Dendritic cell treated with granulocyte-macrophage colony-stimulating factor and Interleukin-4, amounts not matched to agents 40 ng/mL and 50 ng/mL, for 4 days (primary cell): ENCODE measurements at regions of chr3 and their contacts with region 1.

Region 1: GRCh38 chr3:105260385-105260784 is 106.3 kb upstream of the ALCAM start:
- H3K4me3 Mint-ChIP-seq: no peak overlapping the region
- H3K27ac Mint-ChIP-seq: no peak overlapping the region
- H3K4me1 Mint-ChIP-seq: no peaks in the 10 kb centered on the region
- H3K27me3 Mint-ChIP-seq: no peaks in the 10 kb centered on the region

Region 2: DNA sequence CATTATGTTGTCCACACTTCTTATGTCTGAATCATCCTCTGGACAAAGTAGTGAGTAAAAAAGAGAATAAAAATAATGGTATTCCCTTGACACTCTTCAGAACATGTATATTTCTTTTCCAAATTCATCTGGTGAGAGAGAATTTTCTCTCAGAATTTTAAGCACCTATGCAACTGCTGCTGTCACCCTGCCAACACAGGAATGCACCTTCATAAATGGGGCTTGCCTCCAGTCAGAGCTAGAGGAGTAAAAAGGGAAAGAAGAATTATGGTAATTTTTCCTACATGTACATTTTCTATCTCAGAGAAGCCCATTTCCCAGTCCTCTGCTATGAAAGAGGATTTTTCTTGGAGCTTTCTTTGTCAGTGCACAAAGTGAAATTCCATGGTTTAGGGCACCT is 14.2 kb after region 1 on chr3:
- intact Hi-C with region 1: loop called (anchors 1 kb)
- H3K4me3 Mint-ChIP-seq: no peak overlapping the region
- H3K27ac Mint-ChIP-seq: no peak overlapping the region
- H3K4me1 Mint-ChIP-seq: no peaks in the 10 kb centered on the region
- H3K27me3 Mint-ChIP-seq: peaks cover 1% of the 10 kb centered on the region

Region 3: DNA sequence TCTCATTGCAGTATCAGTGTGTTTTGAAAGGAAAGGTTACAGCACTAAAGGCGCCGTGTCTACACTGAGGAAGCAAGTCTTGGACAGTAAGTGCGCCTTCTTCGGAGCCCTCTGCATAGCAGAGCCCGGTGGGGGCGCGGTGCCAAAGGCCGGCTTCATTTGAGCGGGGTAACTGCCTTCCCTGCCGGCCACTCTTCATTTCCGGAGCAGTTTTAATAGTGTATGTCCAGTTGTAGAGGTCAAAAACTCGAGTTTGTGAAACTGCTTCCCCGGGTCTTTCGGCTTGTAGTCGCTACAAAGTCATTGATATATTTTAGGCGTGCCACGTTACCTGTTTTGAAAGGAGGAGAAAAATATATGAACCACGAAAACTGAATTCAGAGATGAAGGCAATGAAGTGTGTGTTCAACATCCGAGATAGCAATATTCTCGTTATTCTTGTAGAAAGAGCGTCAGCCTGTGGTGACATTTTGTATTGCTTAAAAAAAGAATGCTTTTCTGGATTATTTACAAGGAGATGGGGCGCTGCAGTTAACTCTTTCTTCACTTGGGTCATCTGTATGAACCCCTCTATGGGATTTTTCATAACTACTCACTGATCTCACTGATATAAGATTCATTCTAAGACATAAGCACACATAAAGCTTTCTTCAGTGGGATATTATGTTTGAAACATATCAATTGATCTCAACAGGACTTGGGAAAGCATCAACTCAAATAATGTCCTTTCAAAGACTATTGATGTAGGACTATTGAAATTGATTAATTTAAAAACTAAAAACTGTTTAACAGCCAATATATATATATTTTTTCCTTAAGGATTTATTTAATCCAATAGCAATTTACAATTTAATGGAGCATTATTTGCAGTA is 109.4 kb after region 1 on chr3:
- intact Hi-C with region 1: no loop called
- H3K4me3 Mint-ChIP-seq: peak overlapping the region; percentile 87
- H3K27ac Mint-ChIP-seq: peak overlapping the region; percentile 99
- H3K4me1 Mint-ChIP-seq: peaks cover 47% of the 10 kb centered on the region
- H3K27me3 Mint-ChIP-seq: no peaks in the 10 kb centered on the region

Region 4: DNA sequence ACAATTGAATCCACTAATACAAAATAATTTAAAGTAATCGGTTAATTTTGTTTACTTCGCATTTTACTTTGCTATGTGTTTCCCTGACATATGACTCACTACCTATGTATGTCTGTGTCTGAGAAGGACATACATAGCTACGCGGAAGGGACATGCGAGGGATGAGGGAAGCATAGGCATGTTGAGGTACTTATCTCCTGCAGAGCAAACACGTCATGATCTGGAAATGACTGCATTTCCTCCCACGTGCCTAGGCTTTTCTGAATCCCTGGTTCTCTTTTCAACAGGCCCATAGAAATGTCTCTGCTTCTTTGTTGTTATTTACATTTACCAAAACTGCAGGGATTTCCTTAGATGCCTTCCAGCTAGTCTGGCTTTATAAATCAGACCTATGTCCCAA is 133.8 kb after region 1 on chr3:
- intact Hi-C with region 1: no loop called
- H3K4me3 Mint-ChIP-seq: no peak overlapping the region
- H3K27ac Mint-ChIP-seq: no peak overlapping the region
- H3K4me1 Mint-ChIP-seq: peaks cover 6% of the 10 kb centered on the region
- H3K27me3 Mint-ChIP-seq: no peaks in the 10 kb centered on the region